ENCODE measurements at regions of chr15 and their contacts with region 1.

Region 1: GRCh38 chr15:90954712-90955671 is at the start of gene RCCD1:
- DNase-seq: peak; percentile 93 to 95
- ATAC-seq: peak; percentile 89 to 97 (median 96)
- H3K4me3 ChIP-seq: peak within 1 kb of the TSS; percentile 44 to 96 (median 80)
- H3K27ac ChIP-seq: peak within 1 kb of the TSS; percentile 15 to 97 (median 88)
- H3K4me1 ChIP-seq: peaks cover 0 to 43% (median 28%) of the 10 kb centered on the region in 9 donors
- H3K27me3 ChIP-seq: no peaks in the 10 kb centered on the region
- CTCF ChIP-seq: no peak
- total RNA-seq, gene RCCD1: 5.5 to 11.8 (median 7.6) TPM

Region 2: GRCh38 chr15:91022075-91022835 is 67.3 kb after region 1 on chr15 and contains the start of gene VPS33B:
- intact Hi-C with region 1: loop called in 2 of 10 experiments (anchors 10 kb)
- DNase-seq: peak; percentile 76 to 90
- ATAC-seq: peak; percentile 90 to 97 (median 94)
- H3K4me3 ChIP-seq: peak within 1 kb of the TSS; percentile 53 to 96 (median 90)
- H3K27ac ChIP-seq: peak within 1 kb of the TSS in 9 of 10 donors; percentile 46 to 90 (median 78)
- H3K4me1 ChIP-seq: peaks cover 0 to 30% (median 23%) of the 10 kb centered on the region in 9 donors
- H3K27me3 ChIP-seq: no peaks in the 10 kb centered on the region
- CTCF ChIP-seq: peak in 2 of 9 donors; percentile 2 to 15
- total RNA-seq, gene VPS33B: 3.7 to 10.4 (median 5.5) TPM

Region 3: DNA sequence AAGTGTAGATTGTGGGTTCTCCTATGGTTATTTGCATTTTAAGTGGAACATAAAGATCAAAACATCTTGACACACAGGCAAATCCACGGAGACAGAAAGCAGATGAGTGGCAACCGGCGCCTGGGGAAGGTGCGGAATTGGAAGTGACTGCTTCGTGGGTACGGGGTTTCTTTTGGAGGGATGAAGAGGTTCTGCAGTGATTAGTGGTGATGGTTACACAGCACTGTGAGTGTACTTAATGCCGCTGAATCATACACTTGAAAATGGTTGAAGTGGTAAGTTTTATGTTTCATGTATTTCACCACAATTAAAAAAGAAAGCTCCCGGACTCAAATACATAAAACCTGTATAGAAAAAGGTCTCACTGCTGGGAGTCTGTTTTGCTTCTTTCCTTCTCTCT is 85.9 kb after region 1 on chr15:
- intact Hi-C with region 1: loop called in 5 of 10 experiments (anchors 5 to 10 kb)
- DNase-seq: no peak
- ATAC-seq: no peak
- H3K4me3 ChIP-seq: no peak overlapping the region
- H3K27ac ChIP-seq: no peak overlapping the region
- H3K4me1 ChIP-seq: no peaks in the 10 kb centered on the region
- H3K27me3 ChIP-seq: peaks cover 0 to 12% (median 0%) of the 10 kb centered on the region in 7 donors
- CTCF ChIP-seq: no peak

Region 4: GRCh38 chr15:91263996-91264531 is 309.1 kb after region 1 on chr15:
- intact Hi-C with region 1: loop called in 3 of 10 experiments (anchors 2 to 10 kb)
- DNase-seq: peak; percentile 44 to 62
- ATAC-seq: peak; percentile 81 to 95 (median 94)
- H3K4me3 ChIP-seq: peak overlapping the region in 7 of 10 donors; percentile 8 to 41 (median 24)
- H3K27ac ChIP-seq: peak overlapping the region in 9 of 10 donors; percentile 42 to 79 (median 62)
- H3K4me1 ChIP-seq: peaks cover 3 to 39% (median 23%) of the 10 kb centered on the region in 9 donors
- H3K27me3 ChIP-seq: no peaks in the 10 kb centered on the region
- CTCF ChIP-seq: no peak